ENCODE measurements at regions of chr6 and their contacts with region 1.

Region 1: GRCh38 chr6:30616811-30617564 is at the start of gene PPP1R10:
- DNase-seq: peak; percentile 86
- ATAC-seq: peak; percentile 77
- H3K4me3 Mint-ChIP-seq: peak within 1 kb of the TSS; percentile 99
- H3K27ac Mint-ChIP-seq: peak within 1 kb of the TSS; percentile 99
- H3K4me1 Mint-ChIP-seq: peaks cover 35% of the 10 kb centered on the region
- H3K27me3 Mint-ChIP-seq: no peaks in the 10 kb centered on the region
- CTCF ChIP-seq: no peak
- total RNA-seq, gene PPP1R10: 85.6 and 112 TPM in 2 replicates

Region 2: GRCh38 chr6:30102970-30103874 is 513.8 kb before region 1 on chr6:
- CTCF ChIA-PET with region 1: no interaction called
- POLR2A ChIA-PET with region 1: no interaction called
- intact Hi-C with region 1: no loop called
- DNase-seq: peak; percentile 68
- ATAC-seq: peak; percentile 83
- H3K4me3 Mint-ChIP-seq: peak overlapping the region; percentile 89
- H3K27ac Mint-ChIP-seq: peak overlapping the region; percentile 70
- H3K4me1 Mint-ChIP-seq: peaks cover 38% of the 10 kb centered on the region
- H3K27me3 Mint-ChIP-seq: peaks cover 47% of the 10 kb centered on the region
- CTCF ChIP-seq: peak; percentile 41

Region 3: GRCh38 chr6:30326526-30327260 is 290.3 kb before region 1 on chr6 and contains the start of gene TRIM39:
- CTCF ChIA-PET with region 1: no interaction called
- POLR2A ChIA-PET with region 1: interaction called, 13 read pairs
- intact Hi-C with region 1: no loop called
- DNase-seq: peak; percentile 90
- ATAC-seq: peak; percentile 68
- H3K4me3 Mint-ChIP-seq: peak within 1 kb of the TSS; percentile 96
- H3K27ac Mint-ChIP-seq: peak within 1 kb of the TSS; percentile 99
- H3K4me1 Mint-ChIP-seq: peaks cover 57% of the 10 kb centered on the region
- H3K27me3 Mint-ChIP-seq: no peaks in the 10 kb centered on the region
- CTCF ChIP-seq: no peak
- total RNA-seq, gene TRIM39: 21.6 and 22.0 TPM in 2 replicates

Region 4: GRCh38 chr6:30378290-30378937 is 238.6 kb before region 1 on chr6:
- CTCF ChIA-PET with region 1: no interaction called
- POLR2A ChIA-PET with region 1: no interaction called
- intact Hi-C with region 1: no loop called
- DNase-seq: no peak
- ATAC-seq: no peak
- H3K4me3 Mint-ChIP-seq: no peak overlapping the region
- H3K27ac Mint-ChIP-seq: no peak overlapping the region
- H3K4me1 Mint-ChIP-seq: no peaks in the 10 kb centered on the region
- H3K27me3 Mint-ChIP-seq: peaks cover 42% of the 10 kb centered on the region
- CTCF ChIP-seq: no peak

Region 5: GRCh38 chr6:30500421-30501355 is 116.3 kb before region 1 on chr6:
- CTCF ChIA-PET with region 1: no interaction called
- POLR2A ChIA-PET with region 1: no interaction called
- intact Hi-C with region 1: no loop called
- DNase-seq: no peak
- ATAC-seq: peak; percentile 61
- H3K4me3 Mint-ChIP-seq: peak overlapping the region; percentile 74
- H3K27ac Mint-ChIP-seq: peak overlapping the region; percentile 79
- H3K4me1 Mint-ChIP-seq: peaks cover 49% of the 10 kb centered on the region
- H3K27me3 Mint-ChIP-seq: no peaks in the 10 kb centered on the region
- CTCF ChIP-seq: no peak

Region 6: GRCh38 chr6:30533460-30534294 is 83.3 kb before region 1 on chr6:
- CTCF ChIA-PET with region 1: no interaction called
- POLR2A ChIA-PET with region 1: interaction called, 29 read pairs
- intact Hi-C with region 1: no loop called
- DNase-seq: no peak
- ATAC-seq: no peak
- H3K4me3 Mint-ChIP-seq: no peak overlapping the region
- H3K27ac Mint-ChIP-seq: peak overlapping the region; percentile 85
- H3K4me1 Mint-ChIP-seq: peaks cover 45% of the 10 kb centered on the region
- H3K27me3 Mint-ChIP-seq: no peaks in the 10 kb centered on the region
- CTCF ChIP-seq: no peak

Region 7: GRCh38 chr6:30600451-30600961 is 16.5 kb before region 1 on chr6:
- CTCF ChIA-PET with region 1: interaction called, 21 read pairs
- POLR2A ChIA-PET with region 1: interaction called, 75 read pairs
- intact Hi-C with region 1: loop called (anchors 1 kb)
- DNase-seq: no peak
- ATAC-seq: no peak
- H3K4me3 Mint-ChIP-seq: no peak overlapping the region
- H3K27ac Mint-ChIP-seq: no peak overlapping the region
- H3K4me1 Mint-ChIP-seq: peaks cover 9% of the 10 kb centered on the region
- H3K27me3 Mint-ChIP-seq: no peaks in the 10 kb centered on the region
- CTCF ChIP-seq: no peak

Region 8: GRCh38 chr6:30678964-30679726 is 62.2 kb after region 1 on chr6:
- CTCF ChIA-PET with region 1: interaction called, 5 read pairs
- POLR2A ChIA-PET with region 1: interaction called, 58 read pairs
- intact Hi-C with region 1: loop called (anchors 2 kb)
- DNase-seq: peak; percentile 94
- ATAC-seq: peak; percentile 33
- H3K4me3 Mint-ChIP-seq: peak overlapping the region; percentile 92
- H3K27ac Mint-ChIP-seq: peak overlapping the region; percentile 99
- H3K4me1 Mint-ChIP-seq: peaks cover 62% of the 10 kb centered on the region
- H3K27me3 Mint-ChIP-seq: no peaks in the 10 kb centered on the region
- CTCF ChIP-seq: peak; percentile 73

Region 9: DNA sequence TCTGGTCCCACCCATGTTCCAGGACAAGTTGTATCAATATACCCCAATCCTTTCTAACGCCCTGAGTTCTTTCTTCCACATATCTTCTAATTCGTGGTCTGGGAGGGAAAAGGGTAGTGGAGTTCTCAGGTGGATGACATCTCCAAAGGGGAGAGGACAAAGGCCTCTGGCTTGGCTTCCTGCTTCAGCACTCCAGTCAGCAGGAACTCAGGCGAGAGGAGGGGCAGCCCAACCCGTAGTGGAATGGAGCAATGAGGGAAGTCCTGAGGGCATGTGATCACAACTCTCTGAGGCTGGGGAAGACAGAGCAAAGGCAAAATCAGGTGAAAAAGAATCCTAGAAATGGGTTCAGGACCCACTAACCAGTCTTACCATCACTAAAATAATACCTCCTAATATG is 83.4 kb after region 1 on chr6:
- CTCF ChIA-PET with region 1: no interaction called
- POLR2A ChIA-PET with region 1: no interaction called
- intact Hi-C with region 1: no loop called
- DNase-seq: no peak
- ATAC-seq: no peak
- H3K4me3 Mint-ChIP-seq: no peak overlapping the region
- H3K27ac Mint-ChIP-seq: no peak overlapping the region
- H3K4me1 Mint-ChIP-seq: no peaks in the 10 kb centered on the region
- H3K27me3 Mint-ChIP-seq: no peaks in the 10 kb centered on the region
- CTCF ChIP-seq: no peak

Region 10: DNA sequence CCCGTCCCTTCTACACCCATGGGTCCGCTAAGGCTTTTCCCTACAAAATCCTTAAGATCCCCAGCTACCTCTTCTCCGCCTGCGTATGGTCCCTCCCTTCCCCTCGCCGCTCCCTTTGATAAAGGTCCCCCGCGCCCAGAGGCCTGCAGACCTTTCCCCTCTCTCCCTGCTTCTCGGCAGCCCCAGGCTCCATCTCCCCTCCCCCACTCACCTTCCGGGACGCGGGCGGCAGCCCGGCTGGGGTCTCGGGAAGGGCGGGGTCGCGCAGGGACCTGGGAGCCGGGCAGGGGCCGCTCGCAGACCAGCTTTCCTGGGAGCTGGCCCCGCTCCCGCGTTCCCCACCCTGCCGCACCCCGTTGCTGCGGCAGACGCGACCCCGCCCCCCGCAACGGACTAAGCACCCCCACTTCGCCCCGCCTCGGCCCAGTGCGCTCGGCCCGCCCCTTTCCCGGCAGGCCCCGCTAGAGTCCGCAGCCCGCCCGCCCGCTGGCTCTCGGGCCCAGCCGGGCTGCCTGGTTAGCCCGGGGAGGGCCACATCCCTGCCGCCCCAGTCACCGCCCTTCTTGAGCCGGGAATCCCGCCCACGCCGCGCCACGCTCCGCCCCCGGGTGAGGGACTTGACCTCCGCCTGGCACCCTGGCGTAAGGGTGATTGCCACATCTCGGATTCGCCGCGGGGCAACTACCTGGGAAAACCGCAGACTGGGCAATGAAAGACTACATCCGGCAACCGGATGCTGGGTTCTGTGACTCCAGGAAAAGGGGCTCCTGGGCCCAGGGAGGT is 125.5 kb after region 1 on chr6 and contains the start of gene FLOT1:
- CTCF ChIA-PET with region 1: no interaction called
- POLR2A ChIA-PET with region 1: interaction called, 3 read pairs
- intact Hi-C with region 1: loop called (anchors 5 kb)
- DNase-seq: peak; percentile 89
- ATAC-seq: peak; percentile 88
- H3K4me3 Mint-ChIP-seq: peak within 1 kb of the TSS; percentile 89
- H3K27ac Mint-ChIP-seq: peak within 1 kb of the TSS; percentile 64
- H3K4me1 Mint-ChIP-seq: peaks cover 33% of the 10 kb centered on the region
- H3K27me3 Mint-ChIP-seq: no peaks in the 10 kb centered on the region
- CTCF ChIP-seq: no peak
- total RNA-seq, gene FLOT1: 49.1 and 52.0 TPM in 2 replicates